ENCODE measurements at regions of chr5 and their contacts with region 1.

Region 1: DNA sequence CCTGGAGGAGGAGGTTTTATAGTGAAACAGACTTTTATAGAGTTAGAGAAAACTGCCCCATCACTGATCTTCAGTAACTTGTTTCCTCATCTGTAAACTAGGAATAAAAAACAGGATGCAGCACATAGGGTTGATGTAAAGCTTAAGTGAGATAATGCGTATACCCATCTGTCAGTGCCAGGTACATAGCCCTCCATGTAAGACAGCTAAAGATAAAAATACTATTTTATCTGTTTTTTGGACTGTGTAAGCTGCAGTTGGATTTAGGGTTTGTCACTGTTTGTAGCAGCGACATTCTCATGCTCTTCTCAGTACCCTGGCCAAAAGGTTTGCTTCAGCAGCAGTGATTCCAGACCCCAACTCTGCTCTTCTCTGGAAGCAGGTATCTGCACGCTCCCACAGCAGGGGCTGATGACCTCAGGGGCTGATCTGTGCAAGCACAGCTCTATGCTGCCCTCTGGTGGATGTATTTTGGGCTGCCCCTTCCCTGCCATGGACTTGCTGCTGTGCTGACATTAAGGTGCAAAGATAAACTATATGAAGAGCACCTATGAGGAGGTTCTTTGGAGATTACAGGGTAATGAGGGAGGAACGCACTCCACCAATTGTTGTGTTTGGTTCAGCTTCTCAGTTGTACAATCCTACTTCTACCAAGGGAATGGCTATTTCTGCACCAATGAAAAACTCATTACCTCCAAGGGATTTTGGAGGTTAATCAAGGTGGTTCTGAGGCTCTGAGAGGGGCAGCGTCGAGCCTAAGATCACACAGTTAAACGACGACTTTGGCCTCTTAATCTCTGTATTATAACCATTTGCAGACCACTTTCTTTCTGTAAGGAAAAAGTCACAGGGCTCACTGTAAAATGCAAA is 13.1 kb downstream of the HMHB1 start:
- DNase-seq: peak; percentile 56 to 86 (median 75)
- ATAC-seq: peak; percentile 94
- H3K4me3 ChIP-seq: no peak overlapping the region
- H3K4me3 Mint-ChIP-seq: no peak overlapping the region
- H3K27ac ChIP-seq: no peak overlapping the region
- H3K27ac Mint-ChIP-seq: no peak overlapping the region
- H3K4me1 ChIP-seq: peaks cover 0 to 6% of the 10 kb centered on the region in 2 donors
- H3K4me1 Mint-ChIP-seq: peaks cover 0 to 18% (median 10%) of the 10 kb centered on the region in 7 donors
- H3K27me3 ChIP-seq: no peaks in the 10 kb centered on the region
- H3K27me3 Mint-ChIP-seq: peaks cover 0 to 5% (median 3%) of the 10 kb centered on the region in 5 donors

Region 2: GRCh38 chr5:142611154-142611553 is 1213.9 kb before region 1 on chr5:
- CTCF ChIA-PET with region 1: no interaction called
- POLR2A ChIA-PET with region 1: no interaction called
- intact Hi-C with region 1: loop called in 1 of 2 experiments (anchors 10 kb)
- DNase-seq: peak; percentile 21 to 68 (median 54)
- ATAC-seq: peak; percentile 86
- H3K4me3 ChIP-seq: no peak overlapping the region
- H3K4me3 Mint-ChIP-seq: no peak overlapping the region
- H3K27ac ChIP-seq: no peak overlapping the region
- H3K27ac Mint-ChIP-seq: no peak overlapping the region
- H3K4me1 ChIP-seq: no peaks in the 10 kb centered on the region
- H3K4me1 Mint-ChIP-seq: peaks cover 0 to 5% (median 2%) of the 10 kb centered on the region in 7 donors
- H3K27me3 ChIP-seq: no peaks in the 10 kb centered on the region
- H3K27me3 Mint-ChIP-seq: peaks cover 3 to 22% (median 11%) of the 10 kb centered on the region in 5 donors

Region 3: DNA sequence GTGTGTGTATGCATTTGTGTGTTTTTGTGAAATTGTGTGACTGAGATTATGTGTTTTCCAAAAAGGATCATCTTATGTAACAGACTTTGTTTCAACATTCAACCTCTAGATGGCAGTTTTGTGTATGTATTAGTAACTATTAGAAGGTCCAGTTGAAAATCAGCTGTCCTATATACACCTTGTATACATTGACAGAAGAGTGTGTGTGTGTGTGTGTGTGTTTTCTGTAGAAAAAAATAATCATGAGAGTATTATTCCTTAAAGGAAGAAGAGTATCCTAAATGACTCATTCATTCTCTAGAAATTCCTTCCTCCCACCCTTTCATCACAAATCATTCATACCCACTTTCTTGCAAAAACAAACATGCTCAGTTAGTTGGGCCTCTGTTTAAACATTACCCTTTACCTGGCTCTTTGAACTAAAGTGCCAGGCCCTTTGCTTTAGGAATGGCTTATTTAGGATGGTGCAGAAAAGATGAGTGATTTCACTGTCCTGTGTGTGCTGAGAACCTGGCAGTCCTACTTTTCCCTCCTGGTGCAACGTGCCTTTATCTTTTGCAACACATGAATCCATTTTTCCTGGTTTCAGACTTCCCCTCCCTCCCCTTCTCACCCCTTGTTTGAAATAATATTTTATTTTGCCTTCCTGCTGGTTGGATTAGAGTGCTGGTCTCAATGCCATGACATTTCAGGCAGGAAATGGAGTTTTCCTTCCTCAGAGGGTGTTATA is 902.7 kb before region 1 on chr5:
- CTCF ChIA-PET with region 1: interaction called, 10 read pairs
- POLR2A ChIA-PET with region 1: no interaction called
- intact Hi-C with region 1: loop called (anchors 1 to 2 kb)
- DNase-seq: peak in 1 of 9 donors; percentile 3
- ATAC-seq: peak; percentile 50
- H3K4me3 ChIP-seq: no peak overlapping the region
- H3K4me3 Mint-ChIP-seq: no peak overlapping the region
- H3K27ac ChIP-seq: no peak overlapping the region
- H3K27ac Mint-ChIP-seq: peak overlapping the region in 2 of 9 donors; percentile 9 to 19
- H3K4me1 ChIP-seq: peaks cover 0 to 19% of the 10 kb centered on the region in 2 donors
- H3K4me1 Mint-ChIP-seq: peaks cover 7 to 40% (median 11%) of the 10 kb centered on the region in 7 donors
- H3K27me3 ChIP-seq: no peaks in the 10 kb centered on the region
- H3K27me3 Mint-ChIP-seq: no peaks in the 10 kb centered on the region

Region 4: DNA sequence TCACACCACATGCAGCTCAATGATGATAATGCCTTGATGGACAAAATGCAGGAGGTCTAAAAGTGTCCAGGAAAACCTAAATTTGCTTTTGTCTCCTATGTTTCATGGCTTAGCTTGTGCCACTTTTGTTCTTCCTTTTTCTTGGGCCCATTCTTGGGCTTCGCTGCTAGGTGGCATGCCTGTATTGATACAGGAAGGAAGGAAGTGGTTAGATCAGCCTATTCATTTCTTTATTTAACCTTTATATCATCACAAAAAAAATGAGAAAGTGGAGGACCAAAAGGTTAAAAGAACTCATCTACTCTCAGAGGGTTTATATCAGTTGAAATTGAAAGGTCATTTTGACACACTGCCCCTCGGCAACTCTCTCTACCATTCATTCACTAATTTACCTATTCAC is 794.7 kb before region 1 on chr5:
- CTCF ChIA-PET with region 1: no interaction called
- POLR2A ChIA-PET with region 1: no interaction called
- intact Hi-C with region 1: loop called in 1 of 2 experiments (anchors 1 kb)
- DNase-seq: peak in 6 of 9 donors; percentile 11 to 44 (median 31)
- ATAC-seq: peak; percentile 67
- H3K4me3 ChIP-seq: peak overlapping the region; percentile 2
- H3K4me3 Mint-ChIP-seq: peak overlapping the region; percentile 8 to 74 (median 62)
- H3K27ac ChIP-seq: no peak overlapping the region
- H3K27ac Mint-ChIP-seq: peak overlapping the region in 3 of 9 donors; percentile 21 to 54 (median 32)
- H3K4me1 ChIP-seq: peaks cover 17 to 24% of the 10 kb centered on the region in 2 donors
- H3K4me1 Mint-ChIP-seq: peaks cover 25 to 44% (median 32%) of the 10 kb centered on the region in 7 donors
- H3K27me3 ChIP-seq: no peaks in the 10 kb centered on the region
- H3K27me3 Mint-ChIP-seq: no peaks in the 10 kb centered on the region

Region 5: GRCh38 chr5:143195491-143195890 is 629.6 kb before region 1 on chr5:
- CTCF ChIA-PET with region 1: no interaction called
- POLR2A ChIA-PET with region 1: no interaction called
- intact Hi-C with region 1: loop called in 1 of 2 experiments (anchors 10 kb)
- DNase-seq: no peak
- ATAC-seq: no peak
- H3K4me3 ChIP-seq: no peak overlapping the region
- H3K4me3 Mint-ChIP-seq: no peak overlapping the region
- H3K27ac ChIP-seq: no peak overlapping the region
- H3K27ac Mint-ChIP-seq: no peak overlapping the region
- H3K4me1 ChIP-seq: no peaks in the 10 kb centered on the region
- H3K4me1 Mint-ChIP-seq: peaks cover 0 to 8% (median 0%) of the 10 kb centered on the region in 7 donors
- H3K27me3 ChIP-seq: no peaks in the 10 kb centered on the region
- H3K27me3 Mint-ChIP-seq: no peaks in the 10 kb centered on the region

Region 6: DNA sequence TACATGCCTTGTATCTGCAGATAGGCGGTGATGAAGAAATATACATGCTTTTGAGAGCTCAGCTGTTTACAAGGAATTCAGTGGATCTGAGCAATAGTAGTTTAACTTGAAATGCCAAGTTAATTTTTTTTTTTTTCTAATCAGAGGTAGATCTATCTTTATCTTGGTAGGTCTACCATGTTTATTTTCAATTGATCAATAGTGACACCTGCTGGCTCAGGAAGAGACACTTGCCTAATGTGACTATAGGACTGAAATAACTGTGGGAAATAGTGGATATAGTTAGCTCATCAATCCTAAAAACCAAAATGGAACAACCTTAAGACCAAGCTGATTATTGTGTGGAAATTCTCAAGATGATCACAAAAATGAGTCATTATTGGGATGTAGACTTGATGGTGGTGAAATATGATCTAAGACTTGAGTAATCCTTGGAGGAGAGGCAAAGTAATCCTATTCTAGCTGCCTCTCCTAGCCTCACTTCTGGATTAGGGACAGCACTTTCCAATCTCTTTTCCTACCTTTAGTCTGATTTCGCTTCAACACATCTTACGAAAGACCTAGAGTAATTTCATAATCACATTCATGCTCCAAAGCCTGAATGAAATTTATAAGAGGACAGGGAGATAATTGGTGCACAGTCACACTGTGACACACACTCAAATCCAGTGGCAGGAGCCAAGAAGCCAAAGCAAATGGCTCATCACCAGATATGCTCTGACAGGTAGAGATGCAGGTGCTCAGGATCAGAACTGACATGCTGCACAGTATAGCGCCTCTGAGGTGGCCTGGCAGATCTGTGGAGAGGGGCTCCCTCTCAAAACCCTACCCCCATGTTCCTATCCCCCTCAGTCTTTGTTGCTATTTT is 143.2 kb after region 1 on chr5:
- CTCF ChIA-PET with region 1: interaction called, 3 read pairs
- POLR2A ChIA-PET with region 1: interaction called, 3 read pairs
- intact Hi-C with region 1: loop called (anchors 1 kb)
- DNase-seq: peak in 6 of 9 donors; percentile 13 to 43 (median 27)
- ATAC-seq: no peak
- H3K4me3 ChIP-seq: no peak overlapping the region
- H3K4me3 Mint-ChIP-seq: no peak overlapping the region
- H3K27ac ChIP-seq: no peak overlapping the region
- H3K27ac Mint-ChIP-seq: no peak overlapping the region
- H3K4me1 ChIP-seq: no peaks in the 10 kb centered on the region
- H3K4me1 Mint-ChIP-seq: peaks cover 0 to 6% (median 0%) of the 10 kb centered on the region in 7 donors
- H3K27me3 ChIP-seq: no peaks in the 10 kb centered on the region
- H3K27me3 Mint-ChIP-seq: peaks cover 6 to 27% (median 22%) of the 10 kb centered on the region in 5 donors